SK-N-SH (cell line): ENCODE measurements at regions of chr1 and their contacts with region 1.

Region 1: DNA sequence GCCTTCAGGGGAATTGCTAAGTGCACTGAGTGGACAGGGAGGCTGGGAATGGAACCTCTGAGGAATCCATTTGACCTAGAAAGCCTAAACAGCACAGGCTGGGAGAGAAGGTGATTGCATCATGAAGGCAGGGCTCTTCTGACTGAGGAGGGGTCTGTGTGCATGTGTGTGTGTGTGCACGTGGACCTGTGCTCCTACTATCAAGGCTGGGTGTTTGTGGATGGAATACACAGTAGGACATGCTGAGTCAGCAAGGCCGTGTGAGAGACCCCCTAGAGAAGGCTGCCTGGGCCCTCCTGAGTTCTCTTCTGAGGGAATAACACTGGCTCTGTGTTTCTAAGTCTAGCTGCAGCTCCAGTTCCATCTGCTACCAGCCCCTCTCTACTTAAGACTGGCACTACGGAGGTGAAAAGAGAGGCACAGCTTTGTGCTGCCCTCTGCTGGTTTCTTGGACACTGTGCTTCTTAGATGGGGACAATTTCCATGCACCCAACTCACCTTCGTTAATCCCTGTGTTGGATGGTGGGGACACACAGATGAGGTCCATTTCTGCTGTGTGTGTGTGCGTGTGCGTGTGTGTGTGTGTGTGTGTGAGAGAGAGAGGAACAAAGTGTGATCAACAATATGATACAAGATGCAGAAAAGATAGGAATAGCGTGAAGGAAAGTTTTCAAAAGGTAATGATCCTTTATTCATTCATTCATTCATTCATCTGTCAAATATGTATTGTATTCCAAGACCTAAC is 6.2 kb upstream of the EFCAB14 start:
- DNase-seq: peak; percentile 65
- H3K4me3 ChIP-seq: no peak overlapping the region; a peak in 1 of 4 replicates
- H3K27ac ChIP-seq: no peak overlapping the region
- H3K4me1 ChIP-seq: no peaks in the 10 kb centered on the region; a peak in 1 of 4 replicates
- H3K27me3 ChIP-seq: no peaks in the 10 kb centered on the region; the same call in 1 of the 2 replicates
- CTCF ChIP-seq: peak; percentile 84
- EP300 ChIP-seq: no peak
- RAD21 ChIP-seq: peak; percentile 85

Region 2: DNA sequence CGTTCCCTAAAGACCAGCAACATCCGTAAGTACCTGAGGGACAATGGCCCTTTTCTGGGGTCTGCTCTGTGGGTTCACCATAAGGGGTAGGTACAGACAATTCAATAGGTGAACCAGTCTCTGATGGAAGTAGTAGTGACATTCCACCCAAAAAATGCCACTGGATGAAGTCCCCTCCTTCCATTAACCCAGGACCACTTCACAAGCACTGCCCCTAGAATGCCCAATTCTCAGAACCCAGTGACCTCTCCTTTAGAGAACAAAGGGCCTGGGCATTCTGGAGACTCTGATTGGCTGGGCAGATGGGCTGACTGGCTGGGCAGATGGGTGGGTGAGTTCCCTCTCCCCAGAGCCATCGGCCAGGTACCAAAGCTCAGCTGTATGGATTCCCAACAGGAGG is 53.6 kb before region 1 on chr1 and contains the start of gene TEX38:
- CTCF ChIA-PET with region 1: no interaction called
- POLR2A ChIA-PET with region 1: no interaction called
- DNase-seq: no peak
- H3K4me3 ChIP-seq: no peak within 1 kb of the TSS
- H3K27ac ChIP-seq: no peak within 1 kb of the TSS
- H3K4me1 ChIP-seq: peaks cover 0 to 5% of the 10 kb centered on the region in 2 experiments; a peak in 2 of 4 replicates
- H3K27me3 ChIP-seq: no peaks in the 10 kb centered on the region
- CTCF ChIP-seq: no peak
- EP300 ChIP-seq: no peak
- RAD21 ChIP-seq: no peak
- polyA plus RNA-seq, gene TEX38: 0.07 and 0.24 TPM in 2 replicates

Region 3: DNA sequence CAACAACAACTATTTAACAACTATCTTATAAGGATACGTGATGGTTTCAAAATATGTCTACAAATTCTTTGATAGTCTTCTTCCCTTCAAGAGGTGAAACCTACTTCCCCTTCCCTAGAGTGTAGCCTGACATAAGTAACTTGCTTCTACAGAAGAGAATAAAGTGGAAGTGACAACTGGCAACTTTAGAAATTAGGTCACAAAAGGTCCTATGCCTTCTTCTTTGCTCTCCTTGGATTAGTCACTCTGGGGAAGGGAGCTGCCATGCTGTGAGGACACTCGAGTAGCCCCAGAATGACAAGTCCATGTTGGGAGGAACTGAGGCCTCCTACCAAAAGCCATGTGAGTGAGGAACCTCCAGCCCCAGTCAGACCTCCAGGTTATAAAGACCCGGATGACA is 25.5 kb before region 1 on chr1:
- CTCF ChIA-PET with region 1: interaction called, 12 read pairs
- POLR2A ChIA-PET with region 1: no interaction called
- DNase-seq: no peak
- H3K4me3 ChIP-seq: no peak overlapping the region
- H3K27ac ChIP-seq: no peak overlapping the region
- H3K4me1 ChIP-seq: peaks cover 0 to 7% of the 10 kb centered on the region in 2 experiments; a peak in 1 of 4 replicates
- H3K27me3 ChIP-seq: no peaks in the 10 kb centered on the region
- CTCF ChIP-seq: no peak
- EP300 ChIP-seq: no peak
- RAD21 ChIP-seq: no peak

Region 4: GRCh38 chr1:46830665-46831322 is 105.6 kb after region 1 on chr1:
- CTCF ChIA-PET with region 1: no interaction called
- POLR2A ChIA-PET with region 1: no interaction called
- DNase-seq: no peak
- H3K4me3 ChIP-seq: no peak overlapping the region
- H3K27ac ChIP-seq: no peak overlapping the region
- H3K4me1 ChIP-seq: no peaks in the 10 kb centered on the region
- H3K27me3 ChIP-seq: no peaks in the 10 kb centered on the region; the same call in 1 of the 2 replicates
- CTCF ChIP-seq: no peak
- EP300 ChIP-seq: no peak
- RAD21 ChIP-seq: no peak

Region 5: DNA sequence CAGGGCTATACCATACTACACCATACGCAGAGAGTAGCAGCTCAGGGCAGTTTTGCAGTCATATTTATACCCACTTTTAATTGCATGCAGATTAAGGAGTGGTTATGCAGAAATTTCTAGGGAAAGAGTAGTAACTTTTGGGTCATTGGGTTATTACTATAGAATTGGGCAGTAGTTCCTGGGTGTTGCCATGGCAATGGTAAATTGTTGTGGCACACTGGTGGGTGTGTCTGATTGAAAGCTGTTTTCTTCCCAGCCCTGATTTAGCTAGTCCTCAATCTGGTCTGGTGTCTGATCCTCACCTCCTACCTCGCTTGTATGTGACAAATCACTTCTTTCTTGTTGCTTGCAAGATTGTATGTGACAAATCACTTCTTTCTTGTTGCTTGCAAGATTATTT is 185.6 kb after region 1 on chr1:
- CTCF ChIA-PET with region 1: no interaction called
- POLR2A ChIA-PET with region 1: no interaction called
- DNase-seq: no peak
- H3K4me3 ChIP-seq: no peak overlapping the region
- H3K27ac ChIP-seq: no peak overlapping the region
- H3K4me1 ChIP-seq: no peaks in the 10 kb centered on the region
- H3K27me3 ChIP-seq: no peaks in the 10 kb centered on the region
- CTCF ChIP-seq: no peak
- EP300 ChIP-seq: no peak
- RAD21 ChIP-seq: no peak